SK-N-SH (cell line): ENCODE measurements at regions of chr12 and their contacts with region 1.

Region 1: GRCh38 chr12:59149997-59150642 is 229.8 kb upstream of the LRIG3 start:
- DNase-seq: peak; percentile 31
- H3K4me3 ChIP-seq: no peak overlapping the region; a peak in 1 of 4 replicates
- H3K27ac ChIP-seq: no peak overlapping the region
- H3K4me1 ChIP-seq: no peaks in the 10 kb centered on the region
- H3K27me3 ChIP-seq: no peaks in the 10 kb centered on the region; the same call in 1 of the 2 replicates
- CTCF ChIP-seq: peak; percentile 99
- EP300 ChIP-seq: no peak
- RAD21 ChIP-seq: peak; percentile 94

Region 2: GRCh38 chr12:58540480-58541299 is 609.4 kb before region 1 on chr12:
- CTCF ChIA-PET with region 1: interaction called, 41 read pairs
- POLR2A ChIA-PET with region 1: no interaction called
- DNase-seq: peak; percentile 36
- H3K4me3 ChIP-seq: no peak overlapping the region
- H3K27ac ChIP-seq: no peak overlapping the region
- H3K4me1 ChIP-seq: 0 out of 4 replicates have a peak, but pooled peaks cover 0 to 3% of the 10 kb centered on the region in 2 experiments
- H3K27me3 ChIP-seq: no peaks in the 10 kb centered on the region; the same call in 1 of the 2 replicates
- CTCF ChIP-seq: peak; percentile 83
- EP300 ChIP-seq: no peak
- RAD21 ChIP-seq: peak; percentile 94

Region 3: GRCh38 chr12:59122784-59123183 is 27.3 kb before region 1 on chr12:
- CTCF ChIA-PET with region 1: interaction called, 12 read pairs
- POLR2A ChIA-PET with region 1: no interaction called
- DNase-seq: no peak
- H3K4me3 ChIP-seq: no peak overlapping the region
- H3K27ac ChIP-seq: no peak overlapping the region
- H3K4me1 ChIP-seq: no peaks in the 10 kb centered on the region
- H3K27me3 ChIP-seq: peaks cover 9% of the 10 kb centered on the region; the same call in 1 of the 2 replicates
- CTCF ChIP-seq: no peak
- EP300 ChIP-seq: no peak
- RAD21 ChIP-seq: no peak

Region 4: DNA sequence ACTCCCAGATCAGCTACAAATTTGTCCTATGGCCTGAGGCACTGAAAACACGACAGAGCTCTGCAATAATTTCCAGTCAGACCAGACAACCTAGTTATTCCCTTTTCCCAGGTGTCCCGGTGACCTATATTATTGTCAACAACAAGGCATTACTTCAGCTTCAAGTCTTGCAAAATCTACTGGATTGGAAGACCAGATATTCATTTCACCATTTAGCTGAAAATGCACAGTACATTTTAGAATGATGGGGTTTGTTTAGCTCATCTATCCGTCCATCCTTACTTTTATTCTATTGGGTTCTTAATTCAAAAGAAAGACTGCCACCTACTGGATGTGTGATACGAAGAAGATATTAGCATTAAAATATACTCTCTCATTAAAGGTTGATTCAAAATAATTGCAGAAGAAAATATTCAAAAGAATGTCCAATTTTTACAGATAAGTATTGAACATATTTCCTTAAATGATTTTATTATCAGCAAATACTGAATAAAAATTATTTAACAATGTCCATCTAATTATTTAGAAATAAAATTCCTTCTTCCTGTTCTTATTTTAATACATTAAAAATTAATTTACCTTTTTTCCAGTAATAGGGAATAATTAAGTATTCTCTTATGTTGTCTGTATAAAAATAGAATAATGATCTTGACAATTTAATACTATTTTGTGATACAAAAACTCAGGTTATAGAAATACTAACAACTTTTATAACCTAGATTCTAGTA is 15.0 kb after region 1 on chr12:
- CTCF ChIA-PET with region 1: interaction called, 24 read pairs
- POLR2A ChIA-PET with region 1: no interaction called
- DNase-seq: peak; percentile 4
- H3K4me3 ChIP-seq: no peak overlapping the region; a peak in 1 of 4 replicates
- H3K27ac ChIP-seq: no peak overlapping the region
- H3K4me1 ChIP-seq: no peaks in the 10 kb centered on the region
- H3K27me3 ChIP-seq: no peaks in the 10 kb centered on the region
- CTCF ChIP-seq: peak; percentile 75
- EP300 ChIP-seq: no peak
- RAD21 ChIP-seq: peak; percentile 46

Region 5: GRCh38 chr12:59173686-59174085 is 23.6 kb after region 1 on chr12:
- CTCF ChIA-PET with region 1: interaction called, 19 read pairs
- POLR2A ChIA-PET with region 1: no interaction called
- DNase-seq: no peak
- H3K4me3 ChIP-seq: no peak overlapping the region
- H3K27ac ChIP-seq: no peak overlapping the region
- H3K4me1 ChIP-seq: no peaks in the 10 kb centered on the region
- H3K27me3 ChIP-seq: no peaks in the 10 kb centered on the region
- CTCF ChIP-seq: no peak
- EP300 ChIP-seq: no peak
- RAD21 ChIP-seq: no peak

Region 6: GRCh38 chr12:59314209-59314608 is 164.1 kb after region 1 on chr12:
- CTCF ChIA-PET with region 1: no interaction called
- POLR2A ChIA-PET with region 1: no interaction called
- DNase-seq: no peak
- H3K4me3 ChIP-seq: no peak overlapping the region
- H3K27ac ChIP-seq: no peak overlapping the region
- H3K4me1 ChIP-seq: no peaks in the 10 kb centered on the region
- H3K27me3 ChIP-seq: peaks cover 6% of the 10 kb centered on the region; the same call in 1 of the 2 replicates
- CTCF ChIP-seq: no peak
- EP300 ChIP-seq: no peak
- RAD21 ChIP-seq: no peak